Psoas muscle (tissue), 8 donors: ENCODE measurements at regions of chr2 and their contacts with region 1.

Region 1: GRCh38 chr2:163735685-163736432 is at the start of gene FIGN:
- DNase-seq: peak; percentile 85 to 91
- ATAC-seq: peak; percentile 87 to 90 (median 88)
- H3K4me3 ChIP-seq: peak within 1 kb of the TSS; percentile 82
- H3K27ac ChIP-seq: peak within 1 kb of the TSS; percentile 96
- H3K4me1 ChIP-seq: peaks cover 3% of the 10 kb centered on the region
- H3K27me3 ChIP-seq: no peaks in the 10 kb centered on the region
- CTCF ChIP-seq: no peak
- total RNA-seq, gene FIGN: 1.2 to 3.0 (median 1.8) TPM

Region 2: GRCh38 chr2:163471947-163472346 is 263.9 kb before region 1 on chr2:
- intact Hi-C with region 1: loop called in 1 of 2 experiments (anchors 5 kb)
- DNase-seq: no peak
- ATAC-seq: no peak
- H3K4me3 ChIP-seq: no peak overlapping the region
- H3K27ac ChIP-seq: no peak overlapping the region
- H3K4me1 ChIP-seq: peaks cover 6% of the 10 kb centered on the region
- H3K27me3 ChIP-seq: no peaks in the 10 kb centered on the region
- CTCF ChIP-seq: peak; percentile 12